ENCODE measurements at regions of chr6 and their contacts with region 1.

Region 1: DNA sequence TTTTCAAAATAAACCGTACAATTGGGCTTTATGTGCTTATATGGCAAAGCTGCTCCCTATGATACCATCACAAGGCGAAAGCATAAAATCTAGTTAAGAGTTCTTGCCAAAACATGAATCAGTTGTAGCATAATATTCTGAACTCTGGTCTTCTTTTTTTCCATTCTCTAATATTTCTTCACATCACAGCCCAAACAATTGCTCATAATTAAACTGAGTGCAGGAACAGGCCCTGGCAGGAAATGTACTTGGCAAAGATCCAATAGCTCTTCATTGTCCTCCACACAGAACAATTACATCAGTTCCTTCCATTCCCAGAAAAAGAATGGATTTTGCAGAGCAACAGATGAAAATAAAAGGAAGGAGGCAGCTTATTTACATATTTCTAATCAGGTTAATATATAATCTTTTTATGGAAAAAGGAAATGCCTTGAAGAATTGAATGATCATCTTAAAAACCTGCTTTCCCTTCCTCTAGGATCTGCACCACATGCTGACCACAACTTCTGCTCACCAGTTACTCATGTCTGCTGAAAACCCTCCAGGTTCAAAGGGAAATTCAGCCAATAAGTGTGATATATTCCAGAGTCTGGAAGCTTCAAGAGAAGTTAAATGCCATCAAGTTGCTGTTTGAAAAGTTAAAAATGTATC is 123.3 kb upstream of the COL21A1 start:
- DNase-seq: peak; percentile 28
- H3K4me3 ChIP-seq: no peak overlapping the region
- H3K27ac ChIP-seq: peak overlapping the region; percentile 71 to 83 (median 82)
- H3K4me1 ChIP-seq: peaks cover 11 to 34% (median 29%) of the 10 kb centered on the region in 4 donors
- H3K27me3 ChIP-seq: no peaks in the 10 kb centered on the region
- CTCF ChIP-seq: no peak
- EP300 ChIP-seq: no peak
- POLR2A ChIP-seq: no peak

Region 2: DNA sequence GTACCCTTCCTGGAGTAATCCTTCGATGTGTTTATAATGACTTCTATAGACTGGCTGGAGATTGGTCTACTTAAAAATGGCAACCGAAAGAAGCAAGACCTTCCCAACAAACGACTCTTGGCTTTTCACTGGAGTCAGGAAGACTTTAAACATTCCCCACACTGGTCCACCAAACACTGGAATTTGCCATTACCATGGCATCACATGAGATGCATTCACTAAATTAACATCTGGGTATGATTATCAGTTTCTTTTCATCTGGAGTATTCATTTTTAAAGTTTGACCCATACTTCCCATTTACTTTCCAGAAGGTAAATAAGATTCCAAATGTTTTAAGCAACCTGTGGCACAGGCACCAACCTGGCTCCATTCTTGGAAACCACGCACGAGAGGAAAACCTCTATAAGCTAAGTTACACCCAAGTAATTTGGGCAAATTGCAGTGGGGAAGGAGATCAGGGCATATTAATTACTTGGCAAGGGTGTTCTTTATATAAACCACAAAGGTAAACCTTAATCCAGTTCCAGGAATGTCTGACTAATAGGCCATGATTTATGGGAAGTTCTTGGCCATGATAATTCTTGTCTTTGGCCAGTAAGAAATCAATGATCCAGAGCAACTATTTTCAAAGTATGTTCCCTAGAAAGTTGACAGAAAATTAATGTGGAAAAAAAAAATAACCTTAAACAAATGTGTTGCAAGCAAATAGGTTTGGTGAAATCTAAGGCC is 66.7 kb after region 1 on chr6:
- in situ Hi-C with region 1: no loop called
- intact Hi-C with region 1: loop called (anchors 10 kb)
- DNase-seq: no peak
- H3K4me3 ChIP-seq: no peak overlapping the region
- H3K27ac ChIP-seq: no peak overlapping the region
- H3K4me1 ChIP-seq: no peaks in the 10 kb centered on the region
- H3K27me3 ChIP-seq: no peaks in the 10 kb centered on the region
- CTCF ChIP-seq: no peak
- EP300 ChIP-seq: no peak
- POLR2A ChIP-seq: no peak